ENCODE measurements at regions of chr11 and their contacts with region 1.

Region 1: GRCh38 chr11:73335204-73335923 is 27.3 kb downstream of the ARHGEF17 start:
- DNase-seq: peak; percentile 94
- ATAC-seq: peak; percentile 38
- H3K4me3 Mint-ChIP-seq: no peak overlapping the region
- H3K27ac Mint-ChIP-seq: no peak overlapping the region
- H3K4me1 Mint-ChIP-seq: peaks cover 50% of the 10 kb centered on the region
- H3K27me3 Mint-ChIP-seq: peaks cover 64% of the 10 kb centered on the region
- CTCF ChIP-seq: peak; percentile 95

Region 2: GRCh38 chr11:73271936-73272719 is 63.2 kb before region 1 on chr11 and contains the start of gene P2RY6:
- CTCF ChIA-PET with region 1: interaction called, 17 read pairs
- POLR2A ChIA-PET with region 1: interaction called, 3 read pairs
- DNase-seq: peak; percentile 13
- ATAC-seq: no peak; the same call in 1 of the 2 replicates
- H3K4me3 Mint-ChIP-seq: no peak within 1 kb of the TSS
- H3K27ac Mint-ChIP-seq: no peak within 1 kb of the TSS; the same call in 1 of the 2 replicates
- H3K4me1 Mint-ChIP-seq: peaks cover 34% of the 10 kb centered on the region
- H3K27me3 Mint-ChIP-seq: 0 out of 2 replicates have a peak, but pooled peaks cover under 1% of the 10 kb centered on the region
- CTCF ChIP-seq: no peak
- total RNA-seq, gene P2RY6: 0.11 to 0.16 TPM in 2 of 3 replicates, not detected in the other

Region 3: DNA sequence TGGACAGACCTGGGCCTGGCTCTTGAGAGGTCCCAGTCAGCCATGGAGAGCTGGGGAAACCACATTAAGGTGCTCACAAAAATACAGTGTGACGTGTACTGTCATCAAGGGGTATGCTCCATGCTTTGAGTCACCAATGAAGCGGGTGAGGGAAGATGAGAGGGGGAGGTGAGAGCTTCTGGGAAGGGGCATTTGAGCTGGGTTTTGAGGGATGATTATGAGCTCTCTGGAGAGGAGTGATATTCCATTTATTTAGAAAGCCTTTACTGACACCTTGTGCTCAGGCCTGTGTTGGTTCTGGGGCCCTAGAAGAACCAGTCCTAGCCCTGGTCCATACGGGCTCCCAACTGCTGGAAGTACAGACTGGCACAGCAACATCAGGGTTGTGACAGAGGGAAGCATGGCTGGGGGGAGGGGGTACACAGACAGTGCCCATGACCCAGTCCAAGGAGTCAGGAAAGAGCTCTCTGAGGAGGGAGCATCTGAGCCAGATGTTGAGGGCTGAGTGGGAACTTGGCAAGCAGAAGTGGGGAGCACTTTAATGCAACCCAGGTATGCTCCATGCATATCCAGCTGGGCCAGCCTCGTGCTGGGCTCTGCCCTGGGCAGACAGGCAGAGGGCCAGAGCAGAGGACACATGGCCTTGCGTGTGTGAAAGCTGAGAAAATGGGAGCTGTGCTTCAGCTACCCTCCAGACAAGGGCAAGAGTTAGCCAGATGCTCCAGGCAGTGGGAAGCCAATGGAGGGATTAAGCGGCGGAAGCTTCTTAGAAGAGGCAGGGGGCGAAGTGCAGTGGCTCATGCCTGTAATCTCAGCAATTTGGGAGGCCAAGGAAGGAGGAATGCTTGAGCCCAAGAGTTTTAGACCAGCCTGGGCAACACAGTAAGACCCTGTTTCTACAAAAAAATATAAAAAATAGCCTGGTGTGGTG is 37.4 kb before region 1 on chr11:
- CTCF ChIA-PET with region 1: interaction called, 88 read pairs
- POLR2A ChIA-PET with region 1: no interaction called
- DNase-seq: no peak
- ATAC-seq: no peak
- H3K4me3 Mint-ChIP-seq: no peak overlapping the region
- H3K27ac Mint-ChIP-seq: no peak overlapping the region
- H3K4me1 Mint-ChIP-seq: peaks cover 12% of the 10 kb centered on the region
- H3K27me3 Mint-ChIP-seq: peaks cover 6% of the 10 kb centered on the region
- CTCF ChIP-seq: no peak

Region 4: GRCh38 chr11:73325036-73325981 is 10.1 kb before region 1 on chr11:
- CTCF ChIA-PET with region 1: interaction called, 49 read pairs
- POLR2A ChIA-PET with region 1: no interaction called
- DNase-seq: no peak
- ATAC-seq: no peak
- H3K4me3 Mint-ChIP-seq: no peak overlapping the region
- H3K27ac Mint-ChIP-seq: no peak overlapping the region
- H3K4me1 Mint-ChIP-seq: peaks cover 44% of the 10 kb centered on the region
- H3K27me3 Mint-ChIP-seq: peaks cover 24% of the 10 kb centered on the region
- CTCF ChIP-seq: no peak

Region 5: DNA sequence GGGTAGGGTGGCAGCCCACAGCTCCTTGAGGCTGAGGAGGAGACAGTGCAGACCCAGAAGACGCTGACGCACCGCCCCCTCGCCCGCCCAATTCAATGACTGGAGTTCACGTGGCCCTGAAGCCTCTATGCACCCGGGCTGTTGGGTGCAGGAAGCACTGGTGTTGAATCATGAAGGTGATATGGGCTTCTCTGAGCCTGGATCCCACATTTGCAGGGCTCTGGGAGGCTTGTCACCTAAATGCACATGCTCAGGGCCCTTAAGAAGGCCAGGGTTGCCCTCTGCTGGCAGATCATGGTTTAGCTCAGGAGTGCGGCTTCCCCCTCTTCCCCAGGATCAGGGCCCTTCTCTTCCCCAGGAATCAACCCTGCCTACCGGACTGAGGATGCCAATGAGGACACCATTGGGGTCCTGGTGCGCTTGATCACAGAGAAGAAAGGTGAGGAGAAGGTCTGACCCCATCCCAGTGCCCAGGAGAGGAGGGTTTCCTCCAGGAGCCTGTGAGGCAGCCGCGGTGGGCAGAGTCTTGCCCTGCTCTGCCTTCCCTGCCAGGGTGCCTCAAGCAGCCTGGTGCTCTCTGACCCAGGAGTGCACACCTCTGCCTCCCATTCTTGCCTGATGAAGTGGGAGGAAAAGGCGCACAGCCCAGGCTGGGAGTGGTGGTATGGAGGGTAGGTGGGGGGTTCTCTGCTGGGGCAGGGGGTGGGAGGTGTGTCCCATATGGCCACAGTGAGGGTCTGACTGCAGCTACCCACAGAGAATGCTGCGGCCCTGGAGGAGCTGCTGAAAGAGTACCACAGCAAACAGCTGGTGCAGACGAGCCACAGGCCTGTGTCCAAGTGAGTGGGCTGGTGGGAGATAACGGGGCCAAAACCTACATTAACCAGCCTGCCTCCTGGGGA is 58.4 kb after region 1 on chr11:
- CTCF ChIA-PET with region 1: interaction called, 13 read pairs
- POLR2A ChIA-PET with region 1: no interaction called
- DNase-seq: peak; percentile 87
- ATAC-seq: peak; percentile 84
- H3K4me3 Mint-ChIP-seq: no peak overlapping the region
- H3K27ac Mint-ChIP-seq: no peak overlapping the region
- H3K4me1 Mint-ChIP-seq: no peaks in the 10 kb centered on the region
- H3K27me3 Mint-ChIP-seq: no peaks in the 10 kb centered on the region
- CTCF ChIP-seq: peak; percentile 68

Region 6: DNA sequence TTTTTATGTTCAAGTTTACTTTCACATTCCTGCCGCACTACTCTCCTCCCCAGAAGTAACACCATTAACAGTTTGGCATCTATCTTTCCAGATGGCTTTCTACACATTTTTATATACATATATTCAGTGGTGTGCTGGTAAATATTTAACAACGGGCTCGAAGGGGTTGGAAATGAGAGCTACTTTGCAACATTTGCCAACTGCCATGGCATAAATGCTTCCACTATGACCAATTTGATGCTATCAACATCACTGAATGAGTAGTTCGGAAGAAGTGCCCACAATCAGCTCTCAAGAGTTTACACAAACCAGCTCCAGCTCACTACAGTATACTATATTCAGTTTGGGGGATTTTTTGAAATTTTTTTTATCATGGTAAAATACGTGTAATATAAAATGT is 96.0 kb after region 1 on chr11:
- CTCF ChIA-PET with region 1: no interaction called
- POLR2A ChIA-PET with region 1: no interaction called
- DNase-seq: no peak
- ATAC-seq: no peak
- H3K4me3 Mint-ChIP-seq: no peak overlapping the region
- H3K27ac Mint-ChIP-seq: no peak overlapping the region
- H3K4me1 Mint-ChIP-seq: peaks cover 8% of the 10 kb centered on the region
- H3K27me3 Mint-ChIP-seq: no peaks in the 10 kb centered on the region
- CTCF ChIP-seq: no peak